Heart right ventricle (tissue), 16 donors: ENCODE measurements at regions of chr3 and their contacts with region 1.

Region 1: GRCh38 chr3:30453360-30454039 is 152.9 kb upstream of the TGFBR2 start:
- DNase-seq: peak in 1 of 2 donors; percentile 68
- ATAC-seq: peak; percentile 59 to 88 (median 80)
- H3K4me3 ChIP-seq: no peak overlapping the region
- H3K27ac ChIP-seq: peak overlapping the region in 9 of 10 donors; percentile 6 to 76 (median 51)
- H3K4me1 ChIP-seq: peaks cover 0 to 38% (median 9%) of the 10 kb centered on the region in 9 donors
- H3K27me3 ChIP-seq: no peaks in the 10 kb centered on the region
- CTCF ChIP-seq: no peak

Region 2: DNA sequence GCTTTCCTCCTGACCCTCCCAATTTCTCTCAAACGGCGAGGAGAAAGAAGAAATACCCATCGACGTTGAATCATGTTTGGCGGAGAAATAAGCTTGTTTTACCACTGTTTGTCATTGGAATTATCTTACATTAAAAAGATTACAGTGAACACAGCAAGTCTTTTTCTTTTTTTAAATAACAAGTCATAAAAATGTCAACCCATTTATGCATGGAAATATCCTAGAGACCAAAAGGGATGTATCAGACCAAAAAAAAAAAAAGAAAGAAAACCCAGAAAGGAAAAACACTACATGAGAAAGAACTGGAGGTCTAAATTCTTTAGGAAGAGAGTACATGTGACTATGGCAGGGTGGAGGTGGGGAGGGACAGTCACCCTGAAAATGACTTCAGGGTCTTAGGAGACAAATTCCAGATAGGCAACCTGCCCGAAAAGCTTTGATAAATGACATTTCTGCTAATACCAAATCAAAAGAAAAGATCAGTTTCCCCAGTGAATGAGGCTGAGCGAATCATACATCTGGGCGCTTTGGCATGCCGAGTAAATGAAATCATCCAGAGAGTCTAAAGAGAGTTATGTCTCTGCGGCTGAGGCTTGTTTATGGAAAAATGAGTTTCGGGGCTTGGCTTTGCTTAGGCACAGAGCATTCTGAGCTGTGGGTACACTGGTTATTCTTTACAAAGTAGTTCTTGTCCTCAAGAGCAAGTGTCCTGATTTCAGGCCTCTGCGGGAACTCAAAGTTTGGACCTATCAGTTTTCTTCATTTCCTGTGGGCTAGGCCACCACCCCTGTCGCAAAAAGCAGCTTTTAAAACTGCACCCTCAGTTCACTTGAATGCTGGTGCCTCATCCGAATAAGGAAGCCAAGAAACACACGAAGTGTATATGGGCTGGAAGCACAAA is 42.8 kb after region 1 on chr3:
- intact Hi-C with region 1: loop called in 1 of 10 experiments (anchors 5 kb)
- DNase-seq: no peak
- ATAC-seq: peak; percentile 37 to 85 (median 51)
- H3K4me3 ChIP-seq: no peak overlapping the region
- H3K27ac ChIP-seq: peak overlapping the region; percentile 34 to 83 (median 66)
- H3K4me1 ChIP-seq: peaks cover 2 to 61% (median 28%) of the 10 kb centered on the region in 9 donors
- H3K27me3 ChIP-seq: no peaks in the 10 kb centered on the region
- CTCF ChIP-seq: no peak

Region 3: DNA sequence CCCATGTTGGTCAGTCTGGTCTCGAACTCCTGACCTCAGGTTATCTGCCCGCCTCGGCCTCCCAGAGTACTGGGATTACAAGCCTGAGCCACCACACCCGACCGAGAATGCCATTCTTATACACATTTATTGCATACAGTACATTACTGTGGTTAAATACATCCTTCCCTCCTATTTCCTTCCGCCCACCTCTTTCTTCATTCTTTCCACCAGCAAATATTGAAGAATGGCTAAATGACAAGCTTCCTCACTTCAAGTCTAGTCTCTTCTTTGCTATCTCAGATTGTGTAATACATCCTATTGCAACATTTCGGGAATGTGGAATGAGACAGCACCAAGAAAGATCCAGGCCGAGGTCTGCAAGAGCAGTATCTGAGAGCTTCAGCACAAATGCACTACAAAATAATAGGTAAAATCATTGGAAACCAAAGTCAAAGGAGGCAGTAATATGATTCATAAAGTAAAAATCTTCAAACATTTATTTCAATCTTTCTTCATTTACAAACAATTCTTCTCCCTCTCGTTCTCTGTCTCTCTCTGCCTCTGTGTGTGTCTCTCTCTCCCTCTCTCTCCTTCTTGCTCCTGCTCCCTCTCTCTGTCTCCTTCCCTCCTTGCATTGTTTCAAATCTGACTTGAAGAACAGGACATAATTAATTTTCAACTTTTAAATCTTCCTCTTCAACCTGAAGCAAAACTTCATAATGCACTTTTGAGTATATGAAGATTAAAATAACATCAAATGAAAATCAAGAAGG is 58.2 kb after region 1 on chr3:
- intact Hi-C with region 1: loop called in 1 of 10 experiments (anchors 10 kb)
- DNase-seq: no peak
- ATAC-seq: peak; percentile 64 to 96 (median 83)
- H3K4me3 ChIP-seq: no peak overlapping the region
- H3K27ac ChIP-seq: peak overlapping the region in 8 of 10 donors; percentile 11 to 51 (median 30)
- H3K4me1 ChIP-seq: peaks cover 0 to 20% (median 0%) of the 10 kb centered on the region in 9 donors
- H3K27me3 ChIP-seq: no peaks in the 10 kb centered on the region
- CTCF ChIP-seq: no peak